GM10248 (cell line): ENCODE measurements at regions of chr2 and their contacts with region 1.

Region 1: DNA sequence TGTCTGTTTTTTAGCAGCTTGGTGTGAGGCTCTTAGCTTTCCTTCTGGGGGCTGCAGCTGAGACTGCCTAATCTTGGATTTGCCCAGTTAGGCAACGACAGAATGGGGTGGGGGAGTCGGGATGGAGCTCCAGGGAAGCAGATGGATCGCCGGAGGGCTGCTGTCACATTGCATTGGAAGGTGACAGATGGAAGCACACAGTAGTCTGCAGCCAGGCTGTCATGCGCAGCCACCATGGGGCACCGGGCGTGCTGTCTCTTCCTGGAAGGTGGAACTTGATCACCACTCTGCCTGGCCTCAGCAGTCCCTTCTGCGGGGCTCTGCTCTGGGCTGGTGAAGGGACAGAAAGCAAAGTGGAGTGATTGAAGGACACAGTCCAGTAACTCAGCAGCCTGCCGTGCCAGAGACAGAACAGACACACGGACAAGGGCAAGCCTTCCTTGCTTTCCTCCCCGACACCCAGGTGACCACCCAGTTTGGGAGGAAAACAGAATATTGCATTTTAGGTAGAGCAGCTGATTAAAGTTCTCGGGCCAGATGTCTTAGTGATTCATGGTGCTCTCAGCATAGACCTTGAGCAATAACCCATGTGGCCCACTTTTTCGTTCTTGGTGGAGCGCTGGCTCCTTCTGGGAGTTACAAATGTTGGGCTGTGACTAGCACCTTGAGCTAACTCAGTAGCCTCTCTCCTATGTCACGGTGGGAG is 40.9 kb downstream of the RNF144A start:
- DNase-seq: no peak
- CTCF ChIP-seq: no peak

Region 2: GRCh38 chr2:6945087-6945813 is 12.8 kb before region 1 on chr2:
- CTCF ChIA-PET with region 1: interaction called, 16 read pairs
- POLR2A ChIA-PET with region 1: no interaction called
- DNase-seq: peak; percentile 66
- CTCF ChIP-seq: no peak

Region 3: DNA sequence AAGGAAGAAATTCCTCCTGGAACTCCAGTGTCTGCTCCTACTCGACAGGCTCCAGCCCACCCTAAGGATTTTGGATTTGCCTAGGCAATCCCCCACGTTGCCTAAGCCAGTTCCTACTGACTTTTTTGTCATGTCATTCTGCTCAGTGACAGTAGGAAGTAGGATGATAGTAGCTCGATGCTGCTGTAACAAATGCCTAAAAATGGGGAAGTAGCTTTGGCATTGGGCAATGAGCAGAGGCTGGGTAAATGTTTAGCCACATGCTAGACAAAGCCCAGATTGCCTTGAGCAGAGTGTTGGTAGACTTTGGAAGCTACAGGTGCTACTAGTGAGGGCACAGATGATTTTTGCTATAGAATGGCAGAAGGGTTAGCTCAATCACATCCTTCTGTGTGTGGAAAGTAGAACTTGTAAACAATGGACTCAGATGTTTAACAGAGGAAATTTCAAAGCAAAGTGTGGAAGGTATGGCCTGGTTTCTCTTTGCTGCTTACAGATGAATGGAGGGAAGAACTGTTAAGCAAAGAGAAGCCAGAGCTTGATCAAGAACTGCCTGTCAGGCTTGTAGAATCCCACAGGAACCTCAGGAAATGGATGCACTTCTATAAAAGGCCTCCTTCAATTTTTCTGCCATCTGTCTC is 114.0 kb after region 1 on chr2:
- CTCF ChIA-PET with region 1: no interaction called
- POLR2A ChIA-PET with region 1: no interaction called
- DNase-seq: no peak
- CTCF ChIP-seq: no peak

Region 4: DNA sequence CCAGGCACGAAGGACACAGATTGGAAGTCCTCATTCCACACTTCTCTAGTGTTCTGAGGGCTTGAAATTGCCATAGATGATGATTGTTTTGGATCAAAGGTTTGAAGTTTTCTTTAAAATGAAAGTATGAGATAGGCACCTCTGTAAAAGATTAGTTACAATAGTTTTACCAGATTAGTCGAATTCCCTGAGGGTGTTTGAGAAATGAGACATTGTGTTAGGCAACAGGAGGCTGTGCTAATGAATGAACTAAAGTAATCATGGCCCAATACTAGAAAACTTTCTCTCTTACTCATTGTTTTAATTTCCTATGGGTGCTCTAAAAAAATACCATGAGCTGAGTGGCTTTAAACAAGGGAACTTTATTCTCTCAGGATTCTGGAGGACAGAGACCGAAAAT is 380.9 kb after region 1 on chr2:
- CTCF ChIA-PET with region 1: no interaction called
- POLR2A ChIA-PET with region 1: no interaction called
- DNase-seq: no peak
- CTCF ChIP-seq: no peak